HAP-1 (cell line): ENCODE measurements at regions of chr7 and their contacts with region 1.

Region 1: GRCh38 chr7:121081327-121081936 is 92.9 kb downstream of the CPED1 start:
- DNase-seq: peak in 1 of 2 experiments; percentile 67
- H3K4me3 ChIP-seq: no peak overlapping the region
- H3K4me1 ChIP-seq: no peaks in the 10 kb centered on the region
- H3K27me3 ChIP-seq: peaks cover 11% of the 10 kb centered on the region; the same call in 1 of the 2 replicates

Region 2: GRCh38 chr7:120792091-120792860 is 289.2 kb before region 1 on chr7:
- in situ Hi-C with region 1: loop called (anchors 25 kb)
- DNase-seq: peak; percentile 73 to 90
- H3K4me3 ChIP-seq: no peak overlapping the region
- H3K4me1 ChIP-seq: no peaks in the 10 kb centered on the region
- H3K27me3 ChIP-seq: no peaks in the 10 kb centered on the region

Region 3: GRCh38 chr7:120987683-120988590 is 93.5 kb before region 1 on chr7:
- in situ Hi-C with region 1: loop called (anchors 25 kb)
- DNase-seq: peak; percentile 65 to 90
- H3K4me3 ChIP-seq: peak overlapping the region; percentile 10
- H3K4me1 ChIP-seq: peaks cover 8% of the 10 kb centered on the region
- H3K27me3 ChIP-seq: peaks cover 50% of the 10 kb centered on the region

Region 4: GRCh38 chr7:121032645-121033460 is 48.6 kb before region 1 on chr7:
- in situ Hi-C with region 1: no loop called
- DNase-seq: no peak
- H3K4me3 ChIP-seq: no peak overlapping the region
- H3K4me1 ChIP-seq: no peaks in the 10 kb centered on the region
- H3K27me3 ChIP-seq: peaks cover 5% of the 10 kb centered on the region; the same call in 1 of the 2 replicates

Region 5: GRCh38 chr7:121214657-121215056 is 133.2 kb after region 1 on chr7:
- in situ Hi-C with region 1: no loop called
- DNase-seq: no peak
- H3K4me3 ChIP-seq: no peak overlapping the region
- H3K4me1 ChIP-seq: no peaks in the 10 kb centered on the region
- H3K27me3 ChIP-seq: no peaks in the 10 kb centered on the region

Region 6: GRCh38 chr7:121510296-121510695 is 428.9 kb after region 1 on chr7:
- in situ Hi-C with region 1: no loop called
- DNase-seq: no peak
- H3K4me3 ChIP-seq: no peak overlapping the region
- H3K4me1 ChIP-seq: peaks cover 21% of the 10 kb centered on the region
- H3K27me3 ChIP-seq: no peaks in the 10 kb centered on the region

Region 7: DNA sequence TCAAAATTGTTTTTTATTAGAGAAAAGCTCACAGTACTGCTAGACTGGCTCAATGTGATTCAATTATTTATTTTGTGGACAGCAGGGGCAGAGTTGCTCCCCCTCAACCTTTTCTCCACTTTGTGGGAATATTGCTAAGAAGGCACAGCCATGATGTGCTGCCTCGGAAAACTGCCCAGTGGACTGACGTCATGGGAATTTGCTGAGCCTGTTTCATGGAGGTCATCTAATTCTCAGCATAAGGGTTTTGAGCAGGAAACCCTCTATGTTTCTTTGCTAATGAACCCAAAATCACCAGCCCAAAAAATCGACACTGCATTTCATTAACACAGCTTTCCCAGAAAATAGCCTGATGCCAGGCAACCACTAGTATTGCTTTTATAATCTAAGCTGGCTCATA is 543.5 kb after region 1 on chr7:
- in situ Hi-C with region 1: no loop called
- DNase-seq: no peak
- H3K4me3 ChIP-seq: no peak overlapping the region
- H3K4me1 ChIP-seq: no peaks in the 10 kb centered on the region
- H3K27me3 ChIP-seq: no peaks in the 10 kb centered on the region